ENCODE measurements at regions of chr13 and their contacts with region 1.

Region 1: DNA sequence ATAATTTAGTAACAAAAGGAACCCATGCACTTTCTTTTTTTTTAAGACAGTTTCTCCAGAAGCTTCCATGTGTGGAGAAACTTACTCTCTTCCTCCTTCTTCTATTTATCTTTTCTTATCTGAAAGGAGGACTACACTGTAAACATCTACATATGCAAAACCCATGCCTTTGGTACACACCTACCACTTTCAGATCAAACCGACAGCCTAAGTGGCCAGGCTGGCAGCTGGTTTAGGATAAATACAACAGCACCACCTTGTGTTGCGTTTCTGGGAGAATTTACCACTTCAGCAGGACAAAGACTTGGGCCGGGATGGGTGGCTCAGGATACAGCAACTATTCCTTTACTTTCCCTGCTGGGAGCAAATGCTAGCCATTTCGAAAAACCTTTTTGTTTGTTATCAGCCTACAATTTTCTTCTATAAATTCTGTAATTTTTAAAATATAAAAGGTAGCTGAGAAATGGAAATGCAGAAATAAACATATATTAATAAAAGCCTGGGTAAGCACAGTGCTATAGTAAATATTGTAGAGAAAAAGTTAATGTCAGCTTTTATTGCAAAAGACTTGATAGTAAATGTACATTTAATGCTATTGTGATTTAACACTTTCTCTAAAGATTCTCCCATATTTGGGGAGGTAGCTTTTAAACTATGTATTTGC is 94.0 kb upstream of the RFC3 start:
- DNase-seq: peak; percentile 78
- H3K4me3 Mint-ChIP-seq: no peak overlapping the region
- H3K27ac Mint-ChIP-seq: peak overlapping the region; percentile 57
- H3K4me1 Mint-ChIP-seq: peaks cover 37% of the 10 kb centered on the region
- H3K27me3 Mint-ChIP-seq: no peaks in the 10 kb centered on the region

Region 2: DNA sequence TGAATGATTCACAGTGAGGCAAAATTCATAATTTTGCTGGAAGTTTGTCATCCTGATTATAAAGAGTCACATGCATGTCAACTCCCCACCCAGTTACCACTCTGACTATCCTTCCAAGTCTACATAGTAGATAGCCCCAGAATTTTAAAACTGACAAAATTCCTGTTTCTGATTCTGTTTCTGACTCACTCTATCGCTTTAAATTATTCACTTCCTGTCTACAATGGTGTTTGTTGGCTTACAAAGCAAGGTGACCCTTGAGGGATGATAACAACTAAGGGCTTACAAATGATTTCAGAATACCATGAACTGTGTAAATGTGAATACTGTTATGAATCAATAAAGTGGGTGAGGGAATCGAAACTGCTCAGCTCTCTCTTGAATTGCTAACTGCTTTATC is 806.4 kb before region 1 on chr13:
- CTCF ChIA-PET with region 1: no interaction called
- POLR2A ChIA-PET with region 1: no interaction called
- intact Hi-C with region 1: loop called (anchors 5 kb)
- DNase-seq: peak; percentile 13
- H3K4me3 Mint-ChIP-seq: no peak overlapping the region
- H3K27ac Mint-ChIP-seq: no peak overlapping the region
- H3K4me1 Mint-ChIP-seq: peaks cover 13% of the 10 kb centered on the region
- H3K27me3 Mint-ChIP-seq: peaks cover 8% of the 10 kb centered on the region

Region 3: DNA sequence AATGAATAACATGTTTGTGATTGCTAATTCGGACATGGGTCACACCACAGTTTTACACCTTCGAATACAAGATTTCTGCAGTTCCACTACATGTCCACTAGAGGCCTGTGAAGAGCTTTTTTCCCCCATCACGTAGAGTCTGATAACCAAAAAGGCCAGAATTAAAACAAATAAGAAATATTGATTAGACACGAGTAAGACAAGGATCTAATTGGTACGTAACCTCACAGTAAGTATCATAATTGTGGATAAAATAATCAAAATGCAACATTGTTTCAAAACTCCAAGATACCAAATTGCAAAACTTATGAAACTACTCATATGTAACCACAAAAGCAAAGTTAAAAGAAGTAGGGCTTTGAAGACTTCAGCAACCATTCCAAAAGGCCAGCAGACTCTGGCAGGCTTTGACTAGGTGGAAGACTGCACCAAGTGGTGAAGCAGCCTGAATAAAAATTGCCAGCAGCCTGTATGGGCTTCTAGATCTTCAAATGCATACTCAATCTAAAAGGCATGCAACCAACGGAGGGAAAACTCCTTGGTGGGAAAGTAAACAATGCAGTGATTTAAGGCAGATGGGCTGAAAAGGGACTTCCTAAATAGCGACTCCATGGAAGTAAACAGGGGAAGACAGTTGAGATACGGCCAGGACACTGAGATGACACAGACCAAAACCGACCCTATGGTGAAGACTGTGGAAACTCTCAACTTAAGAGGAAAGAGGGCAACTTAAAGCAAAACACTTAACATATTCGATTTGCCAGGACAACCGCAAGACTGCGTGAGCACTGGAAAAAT is 495.1 kb before region 1 on chr13:
- CTCF ChIA-PET with region 1: interaction called, 25 read pairs
- POLR2A ChIA-PET with region 1: no interaction called
- intact Hi-C with region 1: loop called (anchors 1 kb)
- DNase-seq: no peak
- H3K4me3 Mint-ChIP-seq: no peak overlapping the region
- H3K27ac Mint-ChIP-seq: no peak overlapping the region
- H3K4me1 Mint-ChIP-seq: peaks cover 10% of the 10 kb centered on the region
- H3K27me3 Mint-ChIP-seq: peaks cover 5% of the 10 kb centered on the region

Region 4: DNA sequence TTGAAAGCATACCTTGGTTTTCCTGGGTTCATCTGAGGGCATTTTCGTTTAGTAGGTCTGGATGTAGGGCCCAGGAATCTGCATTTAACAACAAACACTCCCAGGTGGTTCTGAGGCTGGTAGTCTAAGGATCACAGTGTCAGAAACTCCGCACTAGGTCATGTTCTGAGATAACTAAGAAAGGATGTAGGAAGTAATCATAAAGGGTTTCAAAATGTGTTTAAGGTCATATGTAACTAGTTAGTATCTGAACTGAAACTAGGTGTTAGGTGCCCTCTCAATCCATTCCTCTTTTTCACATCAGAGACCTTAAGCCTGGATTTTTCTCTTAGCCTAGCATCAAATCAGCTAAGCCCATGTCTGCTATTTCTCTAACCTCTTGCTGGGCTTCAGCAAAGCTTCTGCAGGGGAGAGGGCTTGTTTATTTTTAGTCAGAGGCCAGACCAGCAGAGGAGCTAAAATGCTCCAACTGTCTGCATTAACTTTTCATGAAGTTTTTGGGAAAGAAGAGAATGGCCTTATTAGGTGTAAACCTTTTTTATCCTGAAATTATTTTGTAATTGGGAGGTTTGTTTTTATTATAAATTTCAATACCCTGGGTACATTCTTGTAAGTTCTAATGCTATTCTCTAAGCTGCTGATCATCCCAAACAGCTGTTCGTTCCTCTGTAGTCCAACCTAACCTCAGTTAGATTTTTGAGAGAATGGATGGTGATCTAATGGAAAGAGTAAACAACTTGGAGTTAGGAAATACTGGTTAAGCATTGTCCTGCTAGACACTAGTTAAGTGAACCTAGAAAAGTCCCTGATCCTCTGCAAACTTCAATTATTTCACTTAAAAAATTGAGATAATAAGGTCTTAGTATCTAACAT is 168.7 kb before region 1 on chr13:
- CTCF ChIA-PET with region 1: interaction called, 8 read pairs
- POLR2A ChIA-PET with region 1: no interaction called
- intact Hi-C with region 1: loop called (anchors 2 kb)
- DNase-seq: peak; percentile 14
- H3K4me3 Mint-ChIP-seq: no peak overlapping the region
- H3K27ac Mint-ChIP-seq: no peak overlapping the region
- H3K4me1 Mint-ChIP-seq: peaks cover 21% of the 10 kb centered on the region
- H3K27me3 Mint-ChIP-seq: no peaks in the 10 kb centered on the region

Region 5: DNA sequence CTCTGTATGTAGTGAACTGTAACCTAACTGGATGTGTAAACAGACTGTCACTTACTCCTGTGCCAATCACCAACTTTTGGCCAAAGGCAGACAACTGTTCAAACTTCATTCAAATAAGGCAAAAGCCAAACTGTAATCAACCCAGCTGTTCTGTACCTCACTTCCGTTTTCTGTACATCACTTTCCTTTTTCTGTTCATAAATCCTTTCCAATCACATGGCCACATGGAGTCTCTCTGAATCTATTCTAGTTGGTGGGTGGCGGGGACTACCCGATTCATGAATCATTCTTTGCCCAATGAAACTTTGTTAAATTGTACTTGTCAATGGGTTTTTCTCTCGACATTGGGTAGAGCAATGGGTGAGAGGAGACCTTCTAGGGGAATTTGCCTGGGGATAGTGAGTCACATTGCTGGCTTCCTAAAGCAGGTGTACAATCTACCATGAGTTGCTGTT is 84.3 kb before region 1 on chr13:
- CTCF ChIA-PET with region 1: interaction called, 5 read pairs
- POLR2A ChIA-PET with region 1: no interaction called
- intact Hi-C with region 1: loop called (anchors 1 kb)
- DNase-seq: peak; percentile 82
- H3K4me3 Mint-ChIP-seq: no peak overlapping the region
- H3K27ac Mint-ChIP-seq: peak overlapping the region; percentile 92
- H3K4me1 Mint-ChIP-seq: peaks cover 57% of the 10 kb centered on the region
- H3K27me3 Mint-ChIP-seq: no peaks in the 10 kb centered on the region

Region 6: GRCh38 chr13:33817901-33818706 is 94.2 kb after region 1 on chr13 and contains the start of gene RFC3:
- CTCF ChIA-PET with region 1: interaction called, 3 read pairs
- POLR2A ChIA-PET with region 1: no interaction called
- intact Hi-C with region 1: loop called (anchors 1 kb)
- DNase-seq: peak; percentile 96
- H3K4me3 Mint-ChIP-seq: peak within 1 kb of the TSS; percentile 99
- H3K27ac Mint-ChIP-seq: peak within 1 kb of the TSS; percentile 62
- H3K4me1 Mint-ChIP-seq: peaks cover 34% of the 10 kb centered on the region
- H3K27me3 Mint-ChIP-seq: peaks cover 4% of the 10 kb centered on the region
- total RNA-seq, gene RFC3: 52.4 to 53.9 TPM

Measured in activated CD4-positive, alpha-beta memory T cell treated with anti-CD3 and anti-CD28 coated beads for 36 hours (primary cell).